MCF 10A (cell line): ENCODE measurements at regions of chr1 and their contacts with region 1.

Region 1: GRCh38 chr1:81186261-81186660 is 614.5 kb upstream of the ADGRL2 start:
- DNase-seq: peak; percentile 64
- H3K4me3 Mint-ChIP-seq: no peak overlapping the region
- H3K27ac Mint-ChIP-seq: peak overlapping the region; percentile 2
- H3K4me1 Mint-ChIP-seq: peaks cover 14% of the 10 kb centered on the region
- H3K27me3 Mint-ChIP-seq: no peaks in the 10 kb centered on the region
- CTCF ChIP-seq: no peak

Region 2: DNA sequence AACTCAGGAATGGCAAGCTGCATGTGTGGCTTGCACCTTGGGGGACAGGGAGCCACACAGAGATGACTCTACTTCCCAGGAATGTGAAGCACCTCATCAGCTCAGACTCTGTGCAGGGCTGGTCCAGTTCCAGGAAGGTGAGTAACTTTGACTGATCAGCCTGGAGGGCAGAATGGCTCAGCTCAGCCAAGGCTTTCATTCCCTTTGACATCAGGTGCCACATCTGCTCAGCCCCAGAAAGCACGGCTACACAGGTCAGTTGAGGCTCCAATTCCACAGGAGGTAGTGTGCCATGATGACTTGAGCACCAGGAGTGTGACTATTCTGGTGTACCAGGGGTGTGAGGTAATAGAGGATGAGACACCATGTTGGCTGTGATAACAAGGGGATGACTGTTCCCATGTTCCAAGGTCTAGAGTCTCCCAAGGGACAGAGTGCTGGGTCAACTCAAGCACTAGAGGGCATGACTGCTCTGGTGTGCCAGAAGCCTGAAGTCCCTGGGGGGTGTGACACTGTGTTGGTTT is 11.3 kb before region 1 on chr1:
- CTCF ChIA-PET with region 1: interaction called, 5 read pairs
- POLR2A ChIA-PET with region 1: interaction called, 13 read pairs
- intact Hi-C with region 1: no loop called
- DNase-seq: peak; percentile 98
- H3K4me3 Mint-ChIP-seq: peak overlapping the region; percentile 16
- H3K27ac Mint-ChIP-seq: peak overlapping the region; percentile 74
- H3K4me1 Mint-ChIP-seq: peaks cover 36% of the 10 kb centered on the region
- H3K27me3 Mint-ChIP-seq: no peaks in the 10 kb centered on the region
- CTCF ChIP-seq: no peak

Region 3: DNA sequence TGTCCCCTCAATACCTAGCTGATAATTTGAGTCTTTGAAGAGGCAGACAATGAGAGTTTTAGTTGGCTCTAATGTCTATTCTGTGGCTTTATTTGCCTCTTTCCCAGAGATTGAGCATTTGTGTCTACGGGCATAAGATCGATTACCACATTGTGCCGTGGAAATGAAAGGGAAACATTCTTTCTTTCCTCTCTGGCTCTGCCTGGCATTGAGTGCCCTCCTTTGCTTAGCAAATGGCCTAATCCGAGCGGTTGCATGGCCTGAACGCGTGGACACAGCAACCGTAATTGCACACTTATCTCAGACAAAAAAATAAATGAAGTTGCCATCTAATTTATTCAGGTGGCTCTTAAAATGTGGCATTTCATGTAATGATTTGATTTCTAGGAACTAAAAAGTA is 862.3 kb after region 1 on chr1:
- CTCF ChIA-PET with region 1: no interaction called
- POLR2A ChIA-PET with region 1: no interaction called
- intact Hi-C with region 1: no loop called
- DNase-seq: no peak
- H3K4me3 Mint-ChIP-seq: no peak overlapping the region
- H3K27ac Mint-ChIP-seq: no peak overlapping the region
- H3K4me1 Mint-ChIP-seq: no peaks in the 10 kb centered on the region
- H3K27me3 Mint-ChIP-seq: no peaks in the 10 kb centered on the region
- CTCF ChIP-seq: no peak